ENCODE measurements at regions of chr13 and their contacts with region 1.

Region 1: DNA sequence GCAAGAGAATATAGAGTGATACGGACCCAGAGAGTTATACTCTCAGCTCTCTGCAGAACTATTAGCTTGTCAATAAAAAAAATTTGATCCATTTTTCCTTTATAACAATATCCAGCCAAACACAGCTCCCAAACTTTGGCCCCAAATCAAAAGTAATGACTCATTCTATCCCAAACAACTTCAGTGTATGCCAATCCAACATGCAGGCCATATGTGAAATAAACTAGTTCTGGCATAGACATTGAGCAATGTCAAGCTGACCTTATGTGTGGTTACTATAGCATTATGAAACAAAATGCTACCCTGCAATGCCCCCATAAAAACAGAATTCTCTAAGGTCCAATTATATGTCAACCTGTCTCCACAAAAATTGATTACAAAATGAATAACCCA is 209.5 kb downstream of the DNAJC15 start:
- DNase-seq: peak; percentile 95
- H3K4me3 Mint-ChIP-seq: no peak overlapping the region
- H3K27ac Mint-ChIP-seq: peak overlapping the region; percentile 87
- H3K4me1 Mint-ChIP-seq: peaks cover 40% of the 10 kb centered on the region
- H3K27me3 Mint-ChIP-seq: no peaks in the 10 kb centered on the region
- CTCF ChIP-seq: no peak

Region 2: GRCh38 chr13:43072394-43072793 is 160.5 kb before region 1 on chr13:
- CTCF ChIA-PET with region 1: no interaction called
- POLR2A ChIA-PET with region 1: no interaction called
- intact Hi-C with region 1: no loop called
- DNase-seq: peak; percentile 43
- H3K4me3 Mint-ChIP-seq: no peak overlapping the region
- H3K27ac Mint-ChIP-seq: peak overlapping the region; percentile 2
- H3K4me1 Mint-ChIP-seq: peaks cover 24% of the 10 kb centered on the region
- H3K27me3 Mint-ChIP-seq: no peaks in the 10 kb centered on the region
- CTCF ChIP-seq: no peak

Region 3: GRCh38 chr13:43153436-43154097 is 79.3 kb before region 1 on chr13:
- CTCF ChIA-PET with region 1: no interaction called
- POLR2A ChIA-PET with region 1: interaction called, 4 read pairs
- intact Hi-C with region 1: loop called (anchors 1 kb)
- DNase-seq: peak; percentile 93
- H3K4me3 Mint-ChIP-seq: peak overlapping the region; percentile 33
- H3K27ac Mint-ChIP-seq: peak overlapping the region; percentile 93
- H3K4me1 Mint-ChIP-seq: peaks cover 36% of the 10 kb centered on the region
- H3K27me3 Mint-ChIP-seq: no peaks in the 10 kb centered on the region
- CTCF ChIP-seq: no peak

Region 4: GRCh38 chr13:43786773-43787517 is 554.1 kb after region 1 on chr13 and contains the start of gene ENOX1:
- CTCF ChIA-PET with region 1: no interaction called
- POLR2A ChIA-PET with region 1: no interaction called
- intact Hi-C with region 1: loop called (anchors 5 kb)
- DNase-seq: peak; percentile 60
- H3K4me3 Mint-ChIP-seq: peak within 1 kb of the TSS; percentile 80
- H3K27ac Mint-ChIP-seq: peak within 1 kb of the TSS; percentile 23
- H3K4me1 Mint-ChIP-seq: peaks cover 20% of the 10 kb centered on the region
- H3K27me3 Mint-ChIP-seq: no peaks in the 10 kb centered on the region
- CTCF ChIP-seq: peak; percentile 12
- total RNA-seq, gene ENOX1: 1.5 and 1.8 TPM in 2 replicates